ENCODE measurements at regions of chr12 and their contacts with region 1.

Region 1: DNA sequence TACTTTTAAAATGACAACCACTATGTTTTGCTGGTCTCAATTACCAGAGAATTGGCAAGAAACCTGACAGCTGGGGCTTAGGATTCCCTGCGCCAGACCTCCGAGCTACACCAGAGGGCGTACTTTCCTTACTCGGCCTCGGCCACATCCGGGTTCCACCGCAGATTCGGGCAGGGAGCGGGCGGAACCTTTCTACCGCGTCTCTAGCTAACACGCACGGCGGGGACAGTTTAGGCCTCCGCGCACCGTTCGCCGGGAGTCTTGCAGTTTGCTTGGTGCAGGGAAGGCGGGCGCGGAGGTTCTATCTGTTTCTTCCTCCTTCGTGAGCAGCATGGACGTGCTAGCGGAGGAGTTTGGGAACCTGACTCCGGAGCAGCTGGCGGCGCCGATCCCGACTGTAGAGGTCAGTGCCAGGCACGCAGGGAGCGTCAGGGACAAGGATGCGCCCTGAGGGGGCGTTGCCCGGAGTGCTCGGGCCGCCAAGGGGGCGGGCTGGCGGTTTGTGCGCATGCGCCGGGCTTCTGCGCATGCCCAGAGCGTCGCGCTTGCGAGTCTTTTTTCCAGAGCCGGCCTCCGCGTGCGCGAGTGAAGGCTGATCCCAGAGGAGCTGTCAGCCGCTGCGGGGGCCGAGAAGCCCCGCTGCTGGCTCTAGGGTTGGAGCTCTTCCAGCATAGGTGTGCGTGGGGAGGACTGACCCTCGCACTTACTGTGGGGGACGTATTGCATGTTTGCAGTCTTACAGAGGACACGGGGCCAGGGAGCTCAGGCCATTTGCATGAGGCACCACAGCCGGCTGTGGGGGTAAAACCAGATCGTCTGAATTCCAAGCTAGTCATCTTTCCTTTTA is at the start of gene POLR3B:
- DNase-seq: peak; percentile 94
- H3K4me3 Mint-ChIP-seq: peak within 1 kb of the TSS; percentile 86
- H3K27ac Mint-ChIP-seq: peak within 1 kb of the TSS; percentile 94
- H3K4me1 Mint-ChIP-seq: peaks cover 13% of the 10 kb centered on the region
- H3K27me3 Mint-ChIP-seq: no peaks in the 10 kb centered on the region
- CTCF ChIP-seq: peak; percentile 72
- total RNA-seq, gene POLR3B: 11.1 and 15.7 TPM in 2 replicates

Region 2: DNA sequence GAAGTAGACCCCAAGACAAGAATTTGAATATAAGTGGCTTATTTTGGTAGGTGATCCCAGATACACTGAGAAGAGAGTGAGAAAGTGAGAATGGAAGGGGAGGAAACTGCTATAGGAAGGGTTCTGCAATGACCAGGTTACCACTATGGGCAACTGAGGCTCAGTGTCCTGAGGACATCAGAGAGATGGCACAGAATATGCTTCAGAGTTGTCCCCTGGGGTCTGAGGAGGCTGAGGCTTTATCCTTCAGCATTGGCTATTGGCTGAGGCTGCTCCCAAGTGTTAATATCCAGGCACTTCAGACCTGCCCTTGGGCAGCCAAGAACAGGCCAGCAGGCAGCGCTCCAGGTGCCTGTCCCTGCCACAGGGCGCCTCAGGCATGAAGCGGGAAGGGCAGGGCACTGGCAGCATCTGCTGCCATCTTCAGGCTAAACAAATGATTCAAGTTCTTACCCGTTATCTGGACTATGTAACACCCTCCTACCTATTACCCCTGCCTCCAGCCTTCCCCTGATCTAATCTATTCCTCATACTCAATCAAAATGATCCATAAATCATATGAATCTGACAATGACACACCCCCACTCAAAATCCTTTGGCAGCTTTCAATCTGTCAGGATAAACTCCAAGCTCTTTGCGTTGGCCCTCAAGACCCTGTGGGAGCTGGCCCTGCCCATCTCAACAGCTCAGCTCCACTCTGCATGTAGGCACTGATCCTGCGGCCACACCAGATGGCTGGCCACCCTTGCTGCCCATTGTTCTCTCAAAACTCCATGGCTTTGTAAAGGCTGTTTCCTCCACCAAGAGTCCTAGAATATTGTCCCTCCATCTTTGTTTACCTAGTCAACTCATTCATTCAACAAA is 152.3 kb before region 1 on chr12:
- CTCF ChIA-PET with region 1: no interaction called
- POLR2A ChIA-PET with region 1: no interaction called
- intact Hi-C with region 1: no loop called
- DNase-seq: peak; percentile 43
- H3K4me3 Mint-ChIP-seq: no peak overlapping the region
- H3K27ac Mint-ChIP-seq: peak overlapping the region; percentile 7
- H3K4me1 Mint-ChIP-seq: peaks cover 5% of the 10 kb centered on the region
- H3K27me3 Mint-ChIP-seq: peaks cover 24% of the 10 kb centered on the region
- CTCF ChIP-seq: peak; percentile 38

Region 3: GRCh38 chr12:106296193-106296877 is 61.4 kb before region 1 on chr12:
- CTCF ChIA-PET with region 1: interaction called, 20 read pairs
- POLR2A ChIA-PET with region 1: interaction called, 46 read pairs
- intact Hi-C with region 1: no loop called
- DNase-seq: peak; percentile 80
- H3K4me3 Mint-ChIP-seq: no peak overlapping the region
- H3K27ac Mint-ChIP-seq: peak overlapping the region; percentile 57
- H3K4me1 Mint-ChIP-seq: peaks cover 12% of the 10 kb centered on the region
- H3K27me3 Mint-ChIP-seq: no peaks in the 10 kb centered on the region
- CTCF ChIP-seq: no peak

Region 4: GRCh38 chr12:106317406-106318082 is 40.2 kb before region 1 on chr12:
- CTCF ChIA-PET with region 1: interaction called, 8 read pairs
- POLR2A ChIA-PET with region 1: interaction called, 10 read pairs
- intact Hi-C with region 1: no loop called
- DNase-seq: peak; percentile 90
- H3K4me3 Mint-ChIP-seq: no peak overlapping the region
- H3K27ac Mint-ChIP-seq: peak overlapping the region; percentile 21
- H3K4me1 Mint-ChIP-seq: peaks cover 13% of the 10 kb centered on the region
- H3K27me3 Mint-ChIP-seq: no peaks in the 10 kb centered on the region
- CTCF ChIP-seq: no peak

Region 5: DNA sequence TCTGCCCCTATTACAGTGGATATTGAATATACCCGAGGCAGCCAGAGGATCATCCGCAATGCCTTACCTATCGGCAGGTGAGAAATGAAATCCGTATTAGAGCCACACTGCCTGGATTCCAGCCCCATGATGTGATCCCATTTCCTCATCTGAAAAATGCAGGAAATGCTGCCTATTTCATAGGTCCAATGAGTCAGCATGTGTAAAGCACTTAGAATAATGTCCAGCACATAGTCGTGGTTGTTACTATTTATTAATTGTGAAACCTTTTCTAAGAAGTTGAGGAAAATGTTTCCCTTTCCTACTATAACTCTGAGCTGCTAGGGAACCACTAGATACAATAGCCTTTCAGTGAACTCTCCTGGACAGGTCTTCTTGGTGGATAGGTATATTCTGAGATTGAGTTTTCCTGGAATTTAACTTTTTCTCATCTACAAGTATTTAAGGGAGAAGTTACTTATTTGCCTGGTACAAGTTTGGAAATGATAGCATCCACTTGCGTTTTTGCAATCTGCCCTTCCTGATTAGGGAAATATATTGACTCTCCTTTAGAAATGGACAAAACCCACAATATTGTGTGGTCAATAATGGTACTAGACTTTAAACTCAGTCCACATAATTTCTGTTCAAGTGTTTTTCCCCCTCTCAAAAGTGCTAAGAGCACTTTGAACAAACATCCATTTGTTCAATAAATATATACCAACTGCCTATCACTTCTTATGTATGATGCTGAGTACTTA is 12.0 kb after region 1 on chr12:
- CTCF ChIA-PET with region 1: interaction called, 10 read pairs
- POLR2A ChIA-PET with region 1: interaction called, 50 read pairs
- intact Hi-C with region 1: no loop called
- DNase-seq: peak; percentile 72
- H3K4me3 Mint-ChIP-seq: no peak overlapping the region
- H3K27ac Mint-ChIP-seq: peak overlapping the region; percentile 89
- H3K4me1 Mint-ChIP-seq: peaks cover 16% of the 10 kb centered on the region
- H3K27me3 Mint-ChIP-seq: no peaks in the 10 kb centered on the region
- CTCF ChIP-seq: no peak

Region 6: DNA sequence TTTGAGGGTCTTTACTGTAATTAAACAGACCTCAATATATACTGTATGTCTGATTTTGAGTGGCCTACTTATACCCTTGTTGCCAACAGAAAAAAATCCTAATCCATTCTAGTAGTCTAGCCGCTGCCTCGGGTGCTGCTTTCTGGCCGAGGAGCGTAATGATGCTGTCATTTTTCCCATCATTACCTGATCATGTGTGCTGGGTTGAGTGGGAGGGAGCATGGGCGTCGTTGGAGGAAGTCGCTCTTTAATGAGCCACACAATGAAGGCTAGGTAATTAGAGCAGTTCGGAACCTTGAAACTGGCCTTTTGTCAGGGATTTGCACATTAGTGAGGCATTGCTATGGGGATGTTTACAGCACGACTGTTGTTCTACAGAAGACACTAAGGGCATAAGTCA is 148.9 kb after region 1 on chr12:
- CTCF ChIA-PET with region 1: no interaction called
- POLR2A ChIA-PET with region 1: no interaction called
- intact Hi-C with region 1: no loop called
- DNase-seq: no peak
- H3K4me3 Mint-ChIP-seq: no peak overlapping the region
- H3K27ac Mint-ChIP-seq: no peak overlapping the region
- H3K4me1 Mint-ChIP-seq: no peaks in the 10 kb centered on the region
- H3K27me3 Mint-ChIP-seq: no peaks in the 10 kb centered on the region
- CTCF ChIP-seq: no peak

Region 7: DNA sequence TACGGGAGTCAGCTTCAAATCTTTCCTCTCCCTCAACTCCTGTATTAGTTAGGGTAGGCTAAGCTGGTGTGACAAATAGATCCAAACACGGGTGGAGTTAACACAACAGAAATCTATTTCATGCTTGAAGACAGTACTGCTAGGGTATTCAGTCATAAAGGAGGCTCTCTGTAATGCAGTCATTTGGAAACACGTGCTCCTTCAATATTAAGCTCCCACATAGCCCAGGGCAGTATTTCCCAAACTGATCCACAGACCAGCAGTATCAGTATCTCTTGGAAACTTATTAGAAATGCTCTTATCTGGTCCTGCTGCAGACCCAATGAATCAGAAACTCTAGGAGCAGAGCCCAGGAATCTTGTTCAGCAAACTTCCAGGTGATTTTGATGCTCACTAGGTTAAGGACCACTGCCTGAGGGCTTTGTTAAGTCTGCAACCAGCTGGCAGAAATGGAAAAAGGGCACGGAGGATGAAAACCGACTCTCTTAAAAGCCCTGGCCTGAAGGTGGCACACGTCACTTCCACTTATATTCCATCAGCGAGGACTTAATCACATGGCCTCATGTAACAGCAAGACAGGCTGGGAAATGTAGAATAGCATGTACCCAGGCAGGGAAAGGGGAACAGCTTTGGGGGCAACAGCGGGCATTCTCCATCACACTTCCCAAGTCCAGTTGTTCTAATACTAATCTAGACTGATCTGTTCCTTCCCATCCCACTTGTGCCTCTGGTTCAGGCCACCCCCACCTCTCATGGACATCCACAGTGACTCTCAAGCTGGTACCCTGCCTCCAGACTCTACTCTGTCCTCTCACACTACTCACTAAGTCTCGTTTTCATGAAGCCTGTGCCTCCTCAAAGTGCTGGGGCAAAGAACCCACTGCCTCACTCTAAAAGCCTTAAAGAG is 378.5 kb after region 1 on chr12:
- CTCF ChIA-PET with region 1: no interaction called
- POLR2A ChIA-PET with region 1: no interaction called
- intact Hi-C with region 1: no loop called
- DNase-seq: no peak
- H3K4me3 Mint-ChIP-seq: no peak overlapping the region
- H3K27ac Mint-ChIP-seq: no peak overlapping the region
- H3K4me1 Mint-ChIP-seq: no peaks in the 10 kb centered on the region
- H3K27me3 Mint-ChIP-seq: no peaks in the 10 kb centered on the region
- CTCF ChIP-seq: no peak

Region 8: DNA sequence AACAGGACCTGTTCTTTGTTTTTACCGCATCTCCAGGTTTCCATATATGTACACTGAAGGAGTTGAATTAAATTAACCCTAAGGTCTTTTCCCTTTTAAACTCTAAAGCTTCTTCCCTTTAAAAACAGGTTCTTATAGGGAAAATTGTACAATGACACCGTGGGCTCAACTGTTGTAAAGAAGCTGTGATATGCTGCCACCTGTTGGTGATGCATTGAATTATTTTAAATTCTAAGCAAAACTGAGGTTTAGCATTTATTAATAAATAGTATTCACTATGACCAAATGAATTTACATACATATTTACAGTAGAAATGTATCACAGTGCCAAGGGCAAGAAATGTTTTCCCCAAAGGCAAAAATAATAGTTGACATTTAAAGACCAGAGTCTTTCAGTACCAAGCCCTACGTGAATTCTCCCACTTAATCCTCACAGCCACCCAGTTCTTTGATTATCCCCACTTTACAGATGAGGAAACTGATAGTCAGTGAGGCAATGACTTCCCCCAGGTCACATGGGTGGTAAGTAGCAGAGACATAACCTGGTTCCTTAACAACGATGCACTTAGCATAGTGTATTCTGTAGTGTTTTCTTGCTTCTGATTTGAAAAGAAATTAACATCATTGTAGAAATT is 562.3 kb after region 1 on chr12:
- CTCF ChIA-PET with region 1: interaction called, 5 read pairs
- POLR2A ChIA-PET with region 1: interaction called, 3 read pairs
- intact Hi-C with region 1: loop called (anchors 1 kb)
- DNase-seq: peak; percentile 57
- H3K4me3 Mint-ChIP-seq: no peak overlapping the region
- H3K27ac Mint-ChIP-seq: no peak overlapping the region
- H3K4me1 Mint-ChIP-seq: no peaks in the 10 kb centered on the region
- H3K27me3 Mint-ChIP-seq: peaks cover 12% of the 10 kb centered on the region
- CTCF ChIP-seq: peak; percentile 59